BJ (cell line): ENCODE measurements at regions of chr6 and their contacts with region 1.

Region 1: GRCh38 chr6:159110013-159110412 is 59.2 kb upstream of the FNDC1 start:
- DNase-seq: peak; percentile 25
- H3K4me3 ChIP-seq: no peak overlapping the region
- H3K27me3 ChIP-seq: no peaks in the 10 kb centered on the region; the same call in 1 of the 2 replicates
- CTCF ChIP-seq: peak; percentile 76

Region 2: GRCh38 chr6:158938811-158939254 is 171.2 kb before region 1 on chr6:
- CTCF ChIA-PET with region 1: no interaction called
- POLR2A ChIA-PET with region 1: no interaction called
- DNase-seq: no peak
- H3K4me3 ChIP-seq: peak overlapping the region; percentile 24
- H3K27me3 ChIP-seq: no peaks in the 10 kb centered on the region
- CTCF ChIP-seq: no peak

Region 3: DNA sequence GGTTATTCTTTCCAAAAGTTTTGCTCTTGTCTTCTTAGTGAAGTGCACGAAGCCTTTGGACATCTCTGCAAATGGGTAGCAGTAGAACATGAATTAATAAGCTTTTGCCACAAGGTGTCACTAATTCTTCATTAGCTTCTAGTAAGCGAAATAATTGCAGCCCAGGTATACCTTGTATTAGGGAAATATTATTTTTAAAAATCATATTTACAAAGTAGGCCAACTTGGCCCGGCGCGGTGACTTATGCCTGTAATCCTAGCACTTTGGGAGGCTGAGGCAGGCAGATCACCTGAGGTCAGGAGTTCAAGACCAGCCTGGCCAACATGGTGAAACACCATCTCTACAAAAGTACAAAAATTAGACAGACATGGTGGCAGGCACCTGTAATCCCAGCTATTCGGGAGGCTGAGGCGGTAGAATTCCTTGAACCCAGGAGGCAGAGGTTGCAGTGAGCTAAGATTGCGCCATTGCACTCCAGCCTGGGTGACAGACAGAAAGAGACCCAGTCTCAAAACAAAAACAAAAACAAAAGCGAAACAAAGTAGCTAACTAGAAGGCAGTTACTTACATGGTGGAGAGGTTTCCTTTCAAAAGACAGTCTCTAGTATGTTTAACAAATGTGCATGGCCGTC is 101.2 kb before region 1 on chr6:
- CTCF ChIA-PET with region 1: interaction called, 10 read pairs
- POLR2A ChIA-PET with region 1: no interaction called
- DNase-seq: no peak
- H3K4me3 ChIP-seq: no peak overlapping the region
- H3K27me3 ChIP-seq: no peaks in the 10 kb centered on the region
- CTCF ChIP-seq: peak; percentile 47

Region 4: DNA sequence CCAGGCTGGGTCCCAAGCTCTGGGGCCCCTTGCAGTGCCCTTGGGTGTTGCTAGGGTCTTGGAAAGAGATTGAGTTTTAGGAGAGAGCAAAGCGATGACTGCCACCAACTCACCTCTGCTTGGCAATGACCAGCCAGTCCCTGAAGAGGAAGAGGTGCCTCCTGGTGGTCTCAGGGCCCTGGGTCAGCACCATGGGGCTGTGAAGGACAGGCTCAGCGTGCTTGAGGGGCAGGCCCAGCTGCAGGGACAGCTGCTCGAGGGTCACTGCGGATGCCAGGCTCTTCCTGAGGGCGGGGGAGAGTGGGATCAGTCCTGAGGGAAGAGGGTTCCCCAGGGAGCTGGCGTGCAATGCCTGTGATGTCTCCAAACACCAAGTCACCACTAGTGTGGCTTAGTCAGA is 14.4 kb before region 1 on chr6:
- CTCF ChIA-PET with region 1: interaction called, 11 read pairs
- POLR2A ChIA-PET with region 1: no interaction called
- DNase-seq: no peak
- H3K4me3 ChIP-seq: no peak overlapping the region
- H3K27me3 ChIP-seq: no peaks in the 10 kb centered on the region; the same call in 1 of the 2 replicates
- CTCF ChIP-seq: no peak

Region 5: GRCh38 chr6:159125014-159125609 is 15.1 kb after region 1 on chr6:
- CTCF ChIA-PET with region 1: interaction called, 13 read pairs
- POLR2A ChIA-PET with region 1: no interaction called
- DNase-seq: no peak
- H3K4me3 ChIP-seq: no peak overlapping the region
- H3K27me3 ChIP-seq: peaks cover 2% of the 10 kb centered on the region; the same call in 1 of the 2 replicates
- CTCF ChIP-seq: peak; percentile 28

Region 6: GRCh38 chr6:159422041-159422984 is 312.3 kb after region 1 on chr6:
- CTCF ChIA-PET with region 1: no interaction called
- POLR2A ChIA-PET with region 1: no interaction called
- DNase-seq: no peak
- H3K4me3 ChIP-seq: no peak overlapping the region
- H3K27me3 ChIP-seq: no peaks in the 10 kb centered on the region
- CTCF ChIP-seq: no peak